ENCODE measurements at regions of chr12 and their contacts with region 1.

Region 1: GRCh38 chr12:124767066-124767821 is 96.4 kb downstream of the SCARB1 start:
- DNase-seq: peak in 1 of 2 experiments; percentile 97
- H3K4me3 ChIP-seq: no peak overlapping the region
- H3K27ac ChIP-seq: no peak overlapping the region
- H3K4me1 ChIP-seq: peaks cover 0 to 6% (median 1%) of the 10 kb centered on the region in 4 experiments; a peak in 4 of 7 replicates
- H3K27me3 ChIP-seq: peaks cover 0 to 4% (median 0%) of the 10 kb centered on the region in 4 experiments; a peak in 2 of 7 replicates
- CTCF ChIP-seq: peak; percentile 90 to 94 (median 94)
- EP300 ChIP-seq: no peak
- POLR2A ChIP-seq: no peak
- RAD21 ChIP-seq: peak; percentile 97

Region 2: DNA sequence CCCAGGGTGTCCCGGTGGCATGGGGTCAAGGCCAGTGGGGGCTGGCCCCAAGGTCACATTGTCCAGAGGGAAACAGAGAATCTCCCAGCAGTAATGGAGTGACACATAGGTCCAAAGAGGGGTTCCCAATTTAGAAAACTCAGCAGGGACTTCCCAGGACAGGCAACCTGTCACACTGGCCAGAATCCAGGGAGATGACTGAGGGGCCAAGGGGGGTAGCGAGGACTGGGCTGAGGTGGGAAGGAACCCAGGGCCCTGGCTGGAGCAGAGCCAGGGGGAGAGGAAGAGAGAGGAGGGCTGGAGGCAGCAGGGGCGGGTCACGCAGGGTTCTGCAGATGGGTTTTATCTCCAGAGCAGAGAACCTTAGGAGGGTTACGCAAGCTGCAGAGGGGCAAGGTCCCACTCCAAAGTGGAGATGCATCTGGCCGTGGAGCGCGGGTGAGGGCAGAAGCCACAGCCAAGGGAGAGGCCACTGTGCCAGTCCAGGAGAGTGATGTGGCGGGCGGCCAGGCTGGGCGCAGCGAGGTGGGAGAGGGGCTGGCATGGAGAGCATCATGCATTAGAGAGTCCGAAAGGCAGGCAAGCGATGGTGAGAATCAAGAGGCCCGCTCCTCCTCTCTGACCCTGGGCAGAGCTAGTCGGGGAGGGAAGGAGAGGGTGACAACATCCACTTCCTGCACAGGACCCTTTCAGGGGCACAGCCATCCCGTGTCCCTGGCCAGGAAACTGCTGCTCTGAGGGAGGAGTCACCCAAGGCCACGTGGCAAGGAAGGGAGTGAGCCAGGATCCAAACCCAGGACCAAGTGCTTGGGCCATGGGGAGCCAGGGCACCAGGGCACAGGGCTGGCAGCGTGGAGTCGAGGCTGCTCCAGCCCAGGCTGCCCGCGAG is 228.8 kb before region 1 on chr12:
- CTCF ChIA-PET with region 1: interaction called, 11 read pairs
- POLR2A ChIA-PET with region 1: no interaction called
- DNase-seq: no peak
- H3K4me3 ChIP-seq: no peak overlapping the region
- H3K27ac ChIP-seq: no peak overlapping the region
- H3K4me1 ChIP-seq: peaks cover 0 to 30% (median 13%) of the 10 kb centered on the region in 4 experiments; a peak in 6 of 7 replicates
- H3K27me3 ChIP-seq: no peaks in the 10 kb centered on the region
- CTCF ChIP-seq: no peak
- EP300 ChIP-seq: no peak
- POLR2A ChIP-seq: no peak
- RAD21 ChIP-seq: no peak

Region 3: DNA sequence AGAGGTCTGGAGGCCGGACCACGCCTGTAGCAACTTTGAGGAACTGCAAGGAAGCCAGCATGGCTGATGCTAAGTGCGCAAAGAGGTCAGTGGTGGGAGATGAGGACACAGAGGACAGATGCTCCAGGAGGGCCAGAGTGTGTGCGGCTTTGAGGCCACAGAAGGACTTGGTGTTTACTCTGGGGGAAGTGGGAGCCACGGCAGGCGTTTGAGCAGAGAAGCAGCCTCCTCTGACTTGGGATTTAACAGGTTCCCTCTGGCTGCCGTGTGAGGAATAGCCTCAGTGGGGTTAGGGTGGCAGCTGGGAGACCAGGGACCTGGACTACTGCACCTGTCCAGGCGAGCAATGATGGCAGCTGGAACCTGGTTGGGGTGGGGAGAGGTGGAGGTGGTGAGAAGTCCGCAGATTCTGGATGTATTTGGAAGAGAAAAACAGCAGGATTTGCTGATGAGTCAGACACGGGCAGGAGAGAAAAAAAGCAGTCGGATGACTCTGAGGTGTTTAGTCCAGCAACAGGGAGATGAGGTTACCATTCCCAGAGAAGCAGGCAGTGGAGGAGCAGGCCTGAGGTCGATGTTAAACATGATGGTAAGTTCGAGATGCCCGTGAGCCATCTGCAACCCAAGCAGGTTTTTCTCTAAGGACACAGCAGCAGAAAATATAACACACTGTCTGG is 47.1 kb before region 1 on chr12:
- CTCF ChIA-PET with region 1: interaction called, 11 read pairs
- POLR2A ChIA-PET with region 1: no interaction called
- DNase-seq: no peak
- H3K4me3 ChIP-seq: no peak overlapping the region
- H3K27ac ChIP-seq: no peak overlapping the region
- H3K4me1 ChIP-seq: peaks cover 0 to 3% (median 2%) of the 10 kb centered on the region in 4 experiments; a peak in 4 of 7 replicates
- H3K27me3 ChIP-seq: no peaks in the 10 kb centered on the region
- CTCF ChIP-seq: peak in 2 of 3 experiments; percentile 13 to 26; a peak in 2 of 4 replicates
- EP300 ChIP-seq: no peak
- POLR2A ChIP-seq: no peak
- RAD21 ChIP-seq: peak in 1 of 2 experiments; percentile 20; a peak in 2 of 4 replicates

Region 4: DNA sequence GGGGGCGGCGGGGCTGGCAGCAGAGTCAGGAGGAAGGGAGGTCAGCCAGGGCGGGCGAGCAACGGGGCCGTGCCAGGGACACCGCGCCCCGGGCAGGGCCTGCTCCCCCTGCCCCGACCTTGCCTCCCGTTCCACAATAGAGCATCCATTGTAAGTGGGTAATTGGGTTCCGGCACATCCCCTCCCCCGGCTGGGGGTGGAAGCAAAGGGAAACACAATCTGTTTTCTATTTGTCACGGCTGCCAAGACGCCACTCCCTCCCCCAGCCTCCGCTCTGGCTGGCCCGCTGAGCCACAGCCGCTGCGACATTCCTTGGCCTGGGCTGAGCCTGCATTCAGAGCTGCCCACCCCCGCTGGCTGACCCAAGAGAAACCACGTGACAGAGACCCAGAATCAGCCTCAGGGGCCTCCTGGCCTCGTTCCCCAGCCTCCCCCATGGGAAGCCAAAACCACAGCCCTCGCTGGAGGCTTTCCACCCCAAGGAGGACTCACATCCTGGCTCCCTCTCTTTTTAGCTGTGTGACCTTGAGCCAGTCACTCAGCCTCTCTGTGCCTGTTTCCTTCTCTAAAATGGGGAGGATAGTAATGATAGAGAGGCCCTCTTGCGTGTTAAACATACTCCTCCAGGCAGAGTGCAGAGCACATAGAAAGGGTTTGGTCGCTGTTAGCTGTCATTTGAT is 21.2 kb before region 1 on chr12:
- CTCF ChIA-PET with region 1: interaction called, 159 read pairs
- POLR2A ChIA-PET with region 1: interaction called, 3 read pairs
- DNase-seq: peak; percentile 67 to 82
- H3K4me3 ChIP-seq: peak overlapping the region in 1 of 4 experiments; percentile 33; a peak in 2 of 8 replicates
- H3K27ac ChIP-seq: peak overlapping the region; percentile 70; the same call in 1 of the 2 replicates
- H3K4me1 ChIP-seq: peaks cover 0 to 16% (median 8%) of the 10 kb centered on the region in 4 experiments; a peak in 6 of 7 replicates
- H3K27me3 ChIP-seq: no peaks in the 10 kb centered on the region
- CTCF ChIP-seq: no peak
- EP300 ChIP-seq: peak; percentile 62 to 74; a peak in 2 of 3 replicates
- POLR2A ChIP-seq: no peak; a peak in 1 of 3 replicates
- RAD21 ChIP-seq: peak in 1 of 2 experiments; percentile 24; a peak in 2 of 4 replicates

Region 5: GRCh38 chr12:124779161-124780141 is 12.2 kb after region 1 on chr12:
- CTCF ChIA-PET with region 1: interaction called, 12 read pairs
- POLR2A ChIA-PET with region 1: interaction called, 3 read pairs
- DNase-seq: no peak
- H3K4me3 ChIP-seq: no peak overlapping the region
- H3K27ac ChIP-seq: no peak overlapping the region
- H3K4me1 ChIP-seq: no peaks in the 10 kb centered on the region
- H3K27me3 ChIP-seq: no peaks in the 10 kb centered on the region; a peak in 1 of 7 replicates
- CTCF ChIP-seq: no peak
- EP300 ChIP-seq: no peak
- POLR2A ChIP-seq: no peak
- RAD21 ChIP-seq: no peak